ENCODE measurements at regions of chr12 and their contacts with region 1.

Region 1: GRCh38 chr12:117377744-117378143 is 16.3 kb upstream of the NOS1 start:
- DNase-seq: peak; percentile 21 to 59 (median 44)
- ATAC-seq: peak; percentile 89
- H3K4me3 ChIP-seq: no peak overlapping the region
- H3K27ac ChIP-seq: no peak overlapping the region
- H3K4me1 ChIP-seq: no peaks in the 10 kb centered on the region
- H3K27me3 ChIP-seq: no peaks in the 10 kb centered on the region
- CTCF ChIP-seq: no peak
- EP300 ChIP-seq: no peak
- POLR2A ChIP-seq: no peak
- RAD21 ChIP-seq: no peak

Region 2: DNA sequence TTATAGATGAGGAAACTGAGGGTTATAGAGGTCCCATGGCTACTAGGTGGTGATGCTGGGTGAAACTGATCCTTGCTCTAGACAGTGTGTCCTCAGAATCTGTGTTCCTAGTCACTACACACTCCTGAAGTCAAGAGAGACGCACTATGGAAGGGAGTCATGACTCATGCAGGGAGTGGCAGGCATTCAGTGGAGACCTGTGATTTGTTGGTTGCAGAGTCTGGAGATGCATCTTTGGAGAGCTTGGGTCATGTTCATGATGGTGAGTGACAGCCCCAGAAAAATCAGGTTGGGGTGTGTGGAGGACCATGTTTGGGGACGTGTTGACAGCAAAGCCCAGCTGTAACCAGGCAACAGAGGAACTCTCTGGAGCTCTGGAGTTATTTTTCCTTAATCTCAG is 149.5 kb before region 1 on chr12:
- CTCF ChIA-PET with region 1: no interaction called
- POLR2A ChIA-PET with region 1: no interaction called
- in situ Hi-C with region 1: no loop called
- intact Hi-C with region 1: no loop called
- DNase-seq: no peak
- ATAC-seq: 0 out of 3 replicates have a peak, but pooled peaks have one; percentile 36
- H3K4me3 ChIP-seq: no peak overlapping the region
- H3K27ac ChIP-seq: no peak overlapping the region
- H3K4me1 ChIP-seq: no peaks in the 10 kb centered on the region
- H3K27me3 ChIP-seq: peaks cover 12 to 36% of the 10 kb centered on the region in 2 experiments; a peak in 4 of 5 replicates
- CTCF ChIP-seq: no peak
- EP300 ChIP-seq: no peak
- POLR2A ChIP-seq: no peak
- RAD21 ChIP-seq: no peak

Region 3: GRCh38 chr12:117587631-117588287 is 210.0 kb after region 1 on chr12:
- CTCF ChIA-PET with region 1: no interaction called
- POLR2A ChIA-PET with region 1: no interaction called
- in situ Hi-C with region 1: loop called (anchors 10 kb)
- intact Hi-C with region 1: no loop called
- DNase-seq: peak; percentile 60 to 80 (median 70)
- ATAC-seq: peak; percentile 92
- H3K4me3 ChIP-seq: no peak overlapping the region
- H3K27ac ChIP-seq: no peak overlapping the region
- H3K4me1 ChIP-seq: no peaks in the 10 kb centered on the region
- H3K27me3 ChIP-seq: no peaks in the 10 kb centered on the region; a peak in 1 of 5 replicates
- CTCF ChIP-seq: peak; percentile 82 to 87 (median 82)
- EP300 ChIP-seq: no peak
- POLR2A ChIP-seq: no peak
- RAD21 ChIP-seq: peak; percentile 24 to 74

Measured in K562 (cell line).